H1 (cell line): ENCODE measurements at regions of chr12 and their contacts with region 1.

Region 1: GRCh38 chr12:54279866-54280467 is at the start of gene CBX5:
- DNase-seq: peak; percentile 96 to 98
- H3K4me3 ChIP-seq: peak within 1 kb of the TSS; percentile 83 to 99 (median 96)
- H3K27ac ChIP-seq: peak within 1 kb of the TSS; percentile 99
- H3K4me1 ChIP-seq: peaks cover 0 to 12% (median 8%) of the 10 kb centered on the region in 4 experiments; a peak in 5 of 7 replicates
- H3K27me3 ChIP-seq: no peaks in the 10 kb centered on the region
- CTCF ChIP-seq: no peak
- EP300 ChIP-seq: 0 out of 3 replicates have a peak, but pooled peaks of 1 of the 2 experiments have one; percentile 26
- POLR2A ChIP-seq: peak; percentile 50 to 67; a peak in 2 of 3 replicates
- RAD21 ChIP-seq: no peak; a peak in 1 of 4 replicates
- total RNA-seq, gene CBX5: 217 and 231 TPM in 2 replicates

Region 2: GRCh38 chr12:54220092-54220557 is 59.8 kb before region 1 on chr12:
- CTCF ChIA-PET with region 1: interaction called, 3 read pairs
- POLR2A ChIA-PET with region 1: interaction called, 52 read pairs
- DNase-seq: peak in 1 of 2 experiments; percentile 94
- H3K4me3 ChIP-seq: no peak overlapping the region
- H3K27ac ChIP-seq: no peak overlapping the region
- H3K4me1 ChIP-seq: peaks cover 0 to 20% (median 15%) of the 10 kb centered on the region in 4 experiments; a peak in 6 of 7 replicates
- H3K27me3 ChIP-seq: peaks cover 1 to 36% (median 25%) of the 10 kb centered on the region in 4 experiments; a peak in 6 of 7 replicates
- CTCF ChIP-seq: peak; percentile 73 to 90 (median 84)
- EP300 ChIP-seq: no peak
- POLR2A ChIP-seq: no peak
- RAD21 ChIP-seq: peak; percentile 78 to 84

Region 3: DNA sequence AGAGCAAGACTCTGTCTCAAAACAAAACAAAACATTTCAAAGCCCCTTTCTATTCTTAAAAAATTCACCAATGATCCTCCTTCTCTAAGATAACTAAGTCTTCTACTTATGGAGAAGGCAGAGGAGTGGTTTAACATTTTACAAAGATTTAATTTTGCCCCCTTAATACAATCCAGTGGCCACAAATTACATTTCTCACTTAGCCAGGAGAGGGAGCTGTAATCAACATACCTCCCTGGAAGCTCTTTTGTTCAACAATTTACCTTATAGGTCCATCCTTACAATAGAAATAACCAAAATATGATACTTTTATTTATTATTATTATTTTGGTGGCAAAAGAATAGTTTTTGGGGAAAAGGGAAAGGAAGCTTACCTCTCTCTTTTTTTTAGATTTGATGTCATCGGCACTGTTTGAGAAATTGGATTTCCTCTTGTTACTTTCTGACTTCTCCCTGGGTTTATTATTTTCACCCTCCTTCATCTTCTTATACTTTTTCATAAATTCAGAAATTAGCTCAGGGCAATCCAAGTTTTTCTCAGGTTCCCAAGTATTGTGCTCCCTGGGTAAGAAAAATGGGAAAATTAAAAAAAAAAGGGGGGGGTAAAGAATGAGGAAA is 28.2 kb before region 1 on chr12:
- CTCF ChIA-PET with region 1: interaction called, 90 read pairs
- POLR2A ChIA-PET with region 1: interaction called, 1,006 read pairs
- DNase-seq: no peak
- H3K4me3 ChIP-seq: no peak overlapping the region
- H3K27ac ChIP-seq: no peak overlapping the region
- H3K4me1 ChIP-seq: no peaks in the 10 kb centered on the region
- H3K27me3 ChIP-seq: no peaks in the 10 kb centered on the region
- CTCF ChIP-seq: peak in 2 of 3 experiments; percentile 41 to 55; a peak in 2 of 4 replicates
- EP300 ChIP-seq: no peak
- POLR2A ChIP-seq: no peak
- RAD21 ChIP-seq: peak; percentile 56 to 62

Region 4: GRCh38 chr12:54300732-54301427 is 20.9 kb after region 1 on chr12 and contains the start of gene NFE2:
- CTCF ChIA-PET with region 1: interaction called, 3 read pairs
- POLR2A ChIA-PET with region 1: interaction called, 1,006 read pairs
- DNase-seq: peak; percentile 75 to 85
- H3K4me3 ChIP-seq: peak within 1 kb of the TSS; percentile 24 to 63 (median 46)
- H3K27ac ChIP-seq: peak within 1 kb of the TSS; percentile 75
- H3K4me1 ChIP-seq: peaks cover 12 to 32% (median 21%) of the 10 kb centered on the region in 4 experiments
- H3K27me3 ChIP-seq: peaks cover 0 to 7% (median 0%) of the 10 kb centered on the region in 4 experiments; a peak in 1 of 7 replicates
- CTCF ChIP-seq: peak in 2 of 3 experiments; percentile 21 to 35; a peak in 2 of 4 replicates
- EP300 ChIP-seq: no peak
- POLR2A ChIP-seq: peak in 1 of 2 experiments; percentile 67; a peak in 2 of 3 replicates
- RAD21 ChIP-seq: peak; percentile 8 to 17; a peak in 1 of 4 replicates
- total RNA-seq, gene NFE2: 1.4 and 2.0 TPM in 2 replicates

Region 5: GRCh38 chr12:54352022-54352531 is 72.1 kb after region 1 on chr12:
- CTCF ChIA-PET with region 1: interaction called, 3 read pairs
- POLR2A ChIA-PET with region 1: interaction called, 133 read pairs
- DNase-seq: peak; percentile 50 to 70
- H3K4me3 ChIP-seq: peak overlapping the region; percentile 44 to 64 (median 62)
- H3K27ac ChIP-seq: peak overlapping the region; percentile 61
- H3K4me1 ChIP-seq: peaks cover 27 to 69% (median 33%) of the 10 kb centered on the region in 4 experiments
- H3K27me3 ChIP-seq: peaks cover 0 to 9% (median 4%) of the 10 kb centered on the region in 4 experiments; a peak in 3 of 7 replicates
- CTCF ChIP-seq: no peak
- EP300 ChIP-seq: no peak
- POLR2A ChIP-seq: peak in 1 of 2 experiments; percentile 41; a peak in 1 of 3 replicates
- RAD21 ChIP-seq: no peak

Region 6: GRCh38 chr12:54388235-54389138 is 108.5 kb after region 1 on chr12:
- CTCF ChIA-PET with region 1: no interaction called
- POLR2A ChIA-PET with region 1: interaction called, 16 read pairs
- DNase-seq: no peak
- H3K4me3 ChIP-seq: peak overlapping the region in 1 of 4 experiments; percentile 11; a peak in 2 of 8 replicates
- H3K27ac ChIP-seq: no peak overlapping the region
- H3K4me1 ChIP-seq: peaks cover 51 to 68% (median 58%) of the 10 kb centered on the region in 4 experiments
- H3K27me3 ChIP-seq: peaks cover 0 to 4% (median 0%) of the 10 kb centered on the region in 4 experiments; a peak in 2 of 7 replicates
- CTCF ChIP-seq: no peak
- EP300 ChIP-seq: no peak
- POLR2A ChIP-seq: no peak
- RAD21 ChIP-seq: no peak